ENCODE measurements at regions of chr10 and their contacts with region 1.

Region 1: GRCh38 chr10:3068201-3068967 is 1.0 kb downstream of the PFKP start:
- DNase-seq: peak in 8 of 9 experiments; percentile 19 to 74 (median 52)
- ATAC-seq: peak; percentile 48
- H3K4me3 ChIP-seq: peak overlapping the region; percentile 90 to 96
- H3K4me3 Mint-ChIP-seq: peak overlapping the region; percentile 91
- H3K27ac ChIP-seq: peak overlapping the region; percentile 46 to 64
- H3K27ac Mint-ChIP-seq: peak overlapping the region; percentile 82
- H3K4me1 ChIP-seq: peaks cover 13% of the 10 kb centered on the region
- H3K4me1 Mint-ChIP-seq: peaks cover 30% of the 10 kb centered on the region
- H3K27me3 ChIP-seq: no peaks in the 10 kb centered on the region
- H3K27me3 Mint-ChIP-seq: no peaks in the 10 kb centered on the region
- CTCF ChIP-seq: no peak

Region 2: DNA sequence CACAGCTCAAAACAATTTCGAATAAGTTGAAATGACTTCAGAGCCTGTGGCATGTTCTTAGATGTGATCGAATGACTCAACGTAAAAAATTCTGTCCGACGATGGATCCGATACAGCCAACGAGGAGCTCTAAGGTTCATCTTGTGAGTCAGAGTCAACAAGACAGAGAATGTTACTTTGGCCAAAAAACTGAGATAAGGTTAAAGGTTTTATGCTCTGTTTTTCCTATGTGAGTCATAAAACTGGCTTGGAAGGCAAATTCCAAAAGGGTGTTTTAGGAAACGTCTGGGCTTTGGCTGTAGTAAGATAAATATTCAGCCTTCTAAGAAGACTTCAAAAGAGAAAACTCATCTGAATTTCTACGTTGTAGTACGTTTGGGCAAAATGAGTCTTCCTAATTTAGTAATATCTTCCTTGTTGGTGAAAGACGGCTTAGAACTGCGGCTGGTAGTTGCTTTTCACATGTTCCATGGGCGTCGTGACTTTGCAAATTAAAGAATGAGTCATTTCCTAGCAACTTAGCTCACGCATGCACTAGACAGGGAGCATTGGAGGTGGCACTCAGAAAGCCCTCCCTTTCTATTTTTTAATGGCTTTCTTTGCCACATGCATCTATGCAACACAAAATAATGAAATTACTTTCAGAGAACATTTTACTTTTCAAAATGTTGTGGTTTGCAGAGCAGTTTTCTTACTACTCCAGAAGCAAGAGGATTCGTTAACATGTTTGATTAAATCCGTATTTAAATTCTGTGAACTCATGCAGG is 27.2 kb after region 1 on chr10:
- CTCF ChIA-PET with region 1: no interaction called
- POLR2A ChIA-PET with region 1: no interaction called
- intact Hi-C with region 1: loop called in 1 of 2 experiments (anchors 1 kb)
- DNase-seq: peak in 5 of 9 experiments; percentile 17 to 73 (median 42)
- ATAC-seq: peak; percentile 72
- H3K4me3 ChIP-seq: no peak overlapping the region
- H3K4me3 Mint-ChIP-seq: peak overlapping the region; percentile 1
- H3K27ac ChIP-seq: peak overlapping the region in 1 of 2 experiments; percentile 40
- H3K27ac Mint-ChIP-seq: peak overlapping the region; percentile 12
- H3K4me1 ChIP-seq: peaks cover 17% of the 10 kb centered on the region
- H3K4me1 Mint-ChIP-seq: peaks cover 49% of the 10 kb centered on the region
- H3K27me3 ChIP-seq: no peaks in the 10 kb centered on the region
- H3K27me3 Mint-ChIP-seq: no peaks in the 10 kb centered on the region
- CTCF ChIP-seq: no peak

Region 3: DNA sequence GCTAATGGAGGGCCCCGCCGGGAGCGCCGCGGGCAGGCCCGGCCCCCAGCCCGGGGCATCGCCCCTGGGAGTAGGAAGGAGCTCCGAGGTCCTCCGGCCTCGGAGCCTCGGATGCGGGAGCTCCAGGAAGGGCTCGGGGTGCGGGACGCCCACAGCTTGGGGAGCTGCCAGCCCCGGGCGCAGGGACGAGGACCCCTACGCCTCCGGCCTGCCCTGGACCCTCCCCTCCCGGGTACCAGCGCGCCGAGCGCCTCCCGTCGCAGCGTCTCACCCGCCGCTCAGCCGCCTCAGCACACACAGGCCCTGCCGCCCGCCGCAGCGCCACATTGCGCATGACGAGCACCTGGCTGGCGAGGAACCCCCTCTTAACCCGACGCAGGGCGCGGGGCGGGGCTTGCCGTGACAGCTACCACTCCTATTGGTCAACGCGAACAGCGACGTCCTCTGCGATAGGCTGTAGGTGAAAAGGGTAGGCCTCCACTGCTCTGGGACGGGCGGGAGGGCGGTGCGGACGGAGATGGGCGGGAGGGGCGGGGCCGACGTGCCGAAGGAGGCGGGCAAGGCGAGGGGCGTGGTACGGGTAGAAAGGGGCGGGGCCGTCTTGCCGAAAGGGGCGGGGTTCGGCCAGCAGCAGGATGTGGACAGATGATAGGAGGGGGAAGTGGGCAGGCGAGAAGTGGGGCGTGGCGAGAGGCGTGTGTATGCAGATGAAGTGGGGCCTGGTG is 104.2 kb after region 1 on chr10 and contains the start of gene PITRM1:
- CTCF ChIA-PET with region 1: no interaction called
- POLR2A ChIA-PET with region 1: no interaction called
- intact Hi-C with region 1: loop called in 1 of 2 experiments (anchors 2 kb)
- DNase-seq: peak; percentile 97 to 100 (median 99)
- ATAC-seq: peak; percentile 87
- H3K4me3 ChIP-seq: peak within 1 kb of the TSS; percentile 73 to 98
- H3K4me3 Mint-ChIP-seq: peak within 1 kb of the TSS; percentile 83
- H3K27ac ChIP-seq: peak within 1 kb of the TSS; percentile 71 to 91
- H3K27ac Mint-ChIP-seq: peak within 1 kb of the TSS; percentile 93
- H3K4me1 ChIP-seq: peaks cover 12% of the 10 kb centered on the region
- H3K4me1 Mint-ChIP-seq: peaks cover 25% of the 10 kb centered on the region
- H3K27me3 ChIP-seq: no peaks in the 10 kb centered on the region
- H3K27me3 Mint-ChIP-seq: no peaks in the 10 kb centered on the region
- CTCF ChIP-seq: no peak
- total RNA-seq, gene PITRM1: 73.5 to 82.5 TPM